ENCODE measurements at regions of chr11 and their contacts with region 1.

Region 1: GRCh38 chr11:95156916-95157541 is 67.4 kb downstream of the ENDOD1 start:
- DNase-seq: peak in 1 of 2 donors; percentile 73
- H3K4me3 ChIP-seq: no peak overlapping the region
- H3K27ac ChIP-seq: peak overlapping the region in 4 of 5 donors; percentile 39 to 65 (median 58)
- H3K4me1 ChIP-seq: peaks cover under 1 to 40% (median 12%) of the 10 kb centered on the region in 4 donors
- H3K27me3 ChIP-seq: no peaks in the 10 kb centered on the region
- CTCF ChIP-seq: no peak
- EP300 ChIP-seq: no peak
- POLR2A ChIP-seq: no peak

Region 2: DNA sequence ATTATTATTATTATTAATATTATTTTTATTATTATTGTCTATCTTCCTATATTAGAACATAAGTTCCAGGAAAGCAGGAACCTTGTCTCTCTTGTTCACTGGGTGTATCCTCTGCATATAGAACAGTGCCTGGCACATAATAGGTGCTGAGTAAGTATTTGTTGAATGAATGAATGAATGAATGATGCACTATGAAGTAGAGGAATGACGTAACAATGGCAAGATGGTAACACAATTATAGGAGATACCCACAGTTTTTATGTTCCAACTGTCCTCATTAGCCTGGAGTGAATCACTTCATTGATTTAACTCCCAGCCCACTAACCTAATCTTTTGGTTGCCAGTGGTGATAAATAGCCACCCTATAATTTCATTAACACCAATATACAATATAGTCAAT is 181.4 kb before region 1 on chr11:
- intact Hi-C with region 1: no loop called
- DNase-seq: no peak
- H3K4me3 ChIP-seq: no peak overlapping the region
- H3K27ac ChIP-seq: no peak overlapping the region
- H3K4me1 ChIP-seq: peaks cover 13 to 31% (median 24%) of the 10 kb centered on the region in 4 donors
- H3K27me3 ChIP-seq: no peaks in the 10 kb centered on the region
- CTCF ChIP-seq: no peak
- EP300 ChIP-seq: no peak
- POLR2A ChIP-seq: no peak

Region 3: DNA sequence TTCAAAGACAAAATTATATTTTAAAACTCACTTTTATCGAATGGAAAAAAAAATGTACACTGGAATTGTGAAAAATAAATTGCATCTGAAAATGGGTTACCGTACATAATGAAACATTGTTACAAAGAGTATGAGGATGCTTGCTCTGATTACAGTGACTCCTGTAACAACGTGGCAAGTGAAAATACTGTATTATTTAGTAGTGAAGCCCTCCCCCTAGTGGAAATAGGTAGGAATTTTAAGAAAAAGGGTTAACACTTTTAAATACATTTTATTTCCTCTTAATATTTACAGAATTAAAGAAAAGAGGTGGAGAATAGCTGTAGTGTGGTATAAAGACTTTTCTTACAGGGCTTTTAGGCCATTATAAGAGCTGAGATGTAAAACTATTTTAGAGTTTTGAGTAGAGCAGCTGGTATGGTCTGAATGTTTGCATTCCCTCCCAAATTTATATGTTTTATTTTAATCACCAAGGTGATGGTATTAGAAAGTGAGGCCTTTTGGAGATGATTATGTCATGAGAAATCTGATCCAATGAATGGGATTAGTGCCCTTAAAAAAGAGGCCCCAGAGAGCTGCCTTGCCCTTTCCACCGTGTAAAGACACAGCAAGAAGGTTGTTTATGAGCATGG is 607.4 kb after region 1 on chr11:
- intact Hi-C with region 1: loop called (anchors 5 kb)
- DNase-seq: peak in 1 of 2 donors; percentile 80
- H3K4me3 ChIP-seq: no peak overlapping the region
- H3K27ac ChIP-seq: no peak overlapping the region
- H3K4me1 ChIP-seq: peaks cover 0 to 7% (median 0%) of the 10 kb centered on the region in 4 donors
- H3K27me3 ChIP-seq: no peaks in the 10 kb centered on the region
- CTCF ChIP-seq: peak in 5 of 7 experiments; percentile 44 to 67 (median 60)
- EP300 ChIP-seq: no peak
- POLR2A ChIP-seq: no peak

Measured in stomach (tissue), 19 donors.